CD4-positive, alpha-beta T cell (primary cell): ENCODE measurements at regions of chr17 and their contacts with region 1.

Region 1: GRCh38 chr17:7136266-7136877 is 21.8 kb upstream of the ASGR2 start:
- DNase-seq: peak; percentile 67 to 92 (median 78)
- ATAC-seq: no peak
- H3K4me3 ChIP-seq: no peak overlapping the region
- H3K4me3 Mint-ChIP-seq: no peak overlapping the region
- H3K27ac ChIP-seq: no peak overlapping the region
- H3K27ac Mint-ChIP-seq: peak overlapping the region; percentile 18
- H3K4me1 ChIP-seq: peaks cover 30% of the 10 kb centered on the region
- H3K4me1 Mint-ChIP-seq: peaks cover 24% of the 10 kb centered on the region
- H3K27me3 ChIP-seq: peaks cover 0 to 7% of the 10 kb centered on the region in 2 experiments
- H3K27me3 Mint-ChIP-seq: peaks cover 8% of the 10 kb centered on the region
- CTCF ChIP-seq: peak; percentile 94

Region 2: DNA sequence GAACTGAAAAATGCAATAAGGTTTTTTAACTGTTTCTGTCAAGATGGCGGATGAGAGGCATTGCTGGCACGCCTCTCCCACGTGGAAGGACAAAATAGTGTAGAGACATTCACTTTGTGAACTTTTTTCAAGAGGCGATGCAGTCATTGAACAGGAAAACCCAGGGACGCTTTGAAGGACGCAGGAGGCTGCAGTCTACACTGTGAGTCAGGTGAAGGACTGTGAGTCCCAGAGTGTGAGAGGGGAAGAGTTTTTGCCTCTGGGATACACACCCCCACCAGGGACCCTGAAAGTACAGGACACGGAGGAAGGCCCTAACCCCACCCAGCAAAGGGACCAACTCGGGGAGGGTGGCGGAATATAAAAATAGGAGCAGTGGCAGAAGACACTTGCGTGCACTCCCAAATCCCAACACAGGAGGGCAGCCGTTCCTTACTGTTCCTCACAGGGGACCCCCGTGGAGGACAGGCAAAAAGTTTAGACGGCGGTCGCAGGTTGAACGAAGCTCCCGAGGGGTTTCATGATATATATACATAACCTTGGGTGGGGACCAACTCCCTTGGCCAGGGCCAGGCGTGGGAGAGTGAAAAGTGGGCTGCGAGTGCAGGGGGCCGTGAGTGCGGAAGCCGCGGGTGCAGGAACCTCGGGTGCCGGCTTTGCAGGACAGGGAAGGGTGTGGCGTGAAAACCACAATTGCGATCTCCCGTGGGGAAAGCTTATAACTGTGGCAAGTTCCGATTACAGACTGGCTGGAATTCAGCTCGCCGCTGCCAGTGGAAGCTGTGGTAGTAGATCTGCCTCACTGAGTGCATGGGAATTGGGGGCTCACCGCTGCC is 222.5 kb before region 1 on chr17:
- CTCF ChIA-PET with region 1: interaction called, 5 read pairs
- POLR2A ChIA-PET with region 1: interaction called, 3 read pairs
- intact Hi-C with region 1: loop called (anchors 1 to 2 kb)
- DNase-seq: peak; percentile 54 to 83 (median 72)
- ATAC-seq: peak; percentile 86
- H3K4me3 ChIP-seq: peak overlapping the region; percentile 39
- H3K4me3 Mint-ChIP-seq: peak overlapping the region; percentile 81
- H3K27ac ChIP-seq: no peak overlapping the region
- H3K27ac Mint-ChIP-seq: no peak overlapping the region
- H3K4me1 ChIP-seq: peaks cover 11% of the 10 kb centered on the region
- H3K4me1 Mint-ChIP-seq: peaks cover 34% of the 10 kb centered on the region
- H3K27me3 ChIP-seq: peaks cover 0 to 6% of the 10 kb centered on the region in 2 experiments
- H3K27me3 Mint-ChIP-seq: peaks cover 13% of the 10 kb centered on the region
- CTCF ChIP-seq: peak; percentile 87

Region 3: GRCh38 chr17:7081341-7082062 is 54.9 kb before region 1 on chr17:
- CTCF ChIA-PET with region 1: no interaction called
- POLR2A ChIA-PET with region 1: no interaction called
- intact Hi-C with region 1: no loop called
- DNase-seq: peak in 6 of 14 experiments; percentile 8 to 73 (median 24)
- ATAC-seq: peak; percentile 56
- H3K4me3 ChIP-seq: no peak overlapping the region
- H3K4me3 Mint-ChIP-seq: no peak overlapping the region
- H3K27ac ChIP-seq: no peak overlapping the region
- H3K27ac Mint-ChIP-seq: no peak overlapping the region
- H3K4me1 ChIP-seq: peaks cover 19% of the 10 kb centered on the region
- H3K4me1 Mint-ChIP-seq: peaks cover 31% of the 10 kb centered on the region
- H3K27me3 ChIP-seq: no peaks in the 10 kb centered on the region
- H3K27me3 Mint-ChIP-seq: peaks cover 20% of the 10 kb centered on the region
- CTCF ChIP-seq: no peak

Region 4: GRCh38 chr17:7111784-7112509 is 24.4 kb before region 1 on chr17:
- CTCF ChIA-PET with region 1: no interaction called
- POLR2A ChIA-PET with region 1: no interaction called
- intact Hi-C with region 1: no loop called
- DNase-seq: peak in 2 of 14 experiments; percentile 15 to 32
- ATAC-seq: no peak
- H3K4me3 ChIP-seq: no peak overlapping the region
- H3K4me3 Mint-ChIP-seq: no peak overlapping the region
- H3K27ac ChIP-seq: no peak overlapping the region
- H3K27ac Mint-ChIP-seq: no peak overlapping the region
- H3K4me1 ChIP-seq: peaks cover 9% of the 10 kb centered on the region
- H3K4me1 Mint-ChIP-seq: peaks cover 5% of the 10 kb centered on the region
- H3K27me3 ChIP-seq: no peaks in the 10 kb centered on the region
- H3K27me3 Mint-ChIP-seq: no peaks in the 10 kb centered on the region
- CTCF ChIP-seq: no peak

Region 5: DNA sequence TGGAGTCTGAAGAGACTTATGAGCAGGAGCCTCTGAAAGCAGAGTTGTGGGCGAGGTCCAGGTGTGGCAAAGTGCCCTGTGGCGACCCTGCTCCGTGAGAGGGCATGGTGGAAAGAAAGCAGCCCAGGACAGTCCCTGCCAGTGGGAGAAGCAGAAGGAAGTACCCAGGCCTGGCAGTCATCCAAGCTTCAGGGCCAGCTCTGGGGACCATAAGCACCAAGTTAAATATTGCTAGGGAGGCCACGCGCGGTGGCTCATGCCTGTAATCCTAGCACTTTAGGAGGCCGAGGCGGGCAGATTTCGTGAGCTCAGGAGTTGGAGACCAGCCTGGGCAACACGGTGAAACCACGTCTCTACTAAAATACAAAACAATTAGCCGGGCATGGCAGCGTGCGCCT is 47.7 kb after region 1 on chr17:
- CTCF ChIA-PET with region 1: no interaction called
- POLR2A ChIA-PET with region 1: no interaction called
- intact Hi-C with region 1: no loop called
- DNase-seq: no peak
- ATAC-seq: no peak
- H3K4me3 ChIP-seq: no peak overlapping the region
- H3K4me3 Mint-ChIP-seq: no peak overlapping the region
- H3K27ac ChIP-seq: no peak overlapping the region
- H3K27ac Mint-ChIP-seq: no peak overlapping the region
- H3K4me1 ChIP-seq: no peaks in the 10 kb centered on the region
- H3K4me1 Mint-ChIP-seq: no peaks in the 10 kb centered on the region
- H3K27me3 ChIP-seq: no peaks in the 10 kb centered on the region
- H3K27me3 Mint-ChIP-seq: no peaks in the 10 kb centered on the region
- CTCF ChIP-seq: no peak